Mammary epithelial cell (primary cell): ENCODE measurements at regions of chr6 and their contacts with region 1.

Region 1: DNA sequence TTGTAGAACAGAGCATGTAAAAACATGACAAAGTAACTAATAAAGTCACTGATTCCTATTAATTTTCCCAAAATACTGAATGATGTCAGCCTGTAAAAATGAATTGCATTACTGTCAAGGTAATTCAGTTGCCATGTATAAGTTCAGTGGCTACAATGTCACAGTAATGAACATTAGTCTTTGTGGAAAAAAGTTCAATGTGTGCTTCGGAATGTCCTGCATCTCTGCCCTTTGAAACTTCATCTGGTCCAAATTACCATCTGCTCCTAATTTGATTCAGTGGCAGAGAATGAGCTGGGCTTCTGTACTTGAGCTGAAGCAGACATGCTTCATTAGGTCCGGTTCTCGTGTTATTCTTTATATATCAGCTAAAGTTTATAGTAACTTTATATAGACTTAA is 567.4 kb downstream of the COL12A1 start:
- DNase-seq: no peak
- H3K4me3 ChIP-seq: no peak overlapping the region
- H3K27ac ChIP-seq: no peak overlapping the region
- H3K4me1 ChIP-seq: peaks cover 4% of the 10 kb centered on the region
- H3K27me3 ChIP-seq: no peaks in the 10 kb centered on the region
- CTCF ChIP-seq: no peak

Region 2: GRCh38 chr6:74568861-74569260 is 69.6 kb before region 1 on chr6:
- CTCF ChIA-PET with region 1: no interaction called
- dilution Hi-C with region 1: loop called (anchors 5 kb)
- in situ Hi-C with region 1: no loop called
- intact Hi-C with region 1: no loop called
- DNase-seq: no peak
- H3K4me3 ChIP-seq: no peak overlapping the region
- H3K27ac ChIP-seq: no peak overlapping the region
- H3K4me1 ChIP-seq: no peaks in the 10 kb centered on the region
- H3K27me3 ChIP-seq: peaks cover 2% of the 10 kb centered on the region
- CTCF ChIP-seq: no peak

Region 3: GRCh38 chr6:74579047-74579446 is 59.4 kb before region 1 on chr6:
- CTCF ChIA-PET with region 1: no interaction called
- dilution Hi-C with region 1: no loop called
- in situ Hi-C with region 1: no loop called
- intact Hi-C with region 1: no loop called
- DNase-seq: no peak
- H3K4me3 ChIP-seq: no peak overlapping the region
- H3K27ac ChIP-seq: no peak overlapping the region
- H3K4me1 ChIP-seq: no peaks in the 10 kb centered on the region
- H3K27me3 ChIP-seq: no peaks in the 10 kb centered on the region
- CTCF ChIP-seq: no peak